Activated B cell treated with CpG ODN at 0.5 μM for 24 hours (primary cell): ENCODE measurements at regions of chr2 and their contacts with region 1.

Region 1: GRCh38 chr2:219177552-219178376 is at the start of gene RETREG2:
- DNase-seq: peak; percentile 78
- ATAC-seq: peak; percentile 45
- H3K4me3 Mint-ChIP-seq: peak within 1 kb of the TSS; percentile 96
- H3K27ac Mint-ChIP-seq: peak within 1 kb of the TSS; percentile 99
- H3K4me1 Mint-ChIP-seq: peaks cover 40% of the 10 kb centered on the region
- H3K27me3 Mint-ChIP-seq: no peaks in the 10 kb centered on the region
- CTCF ChIP-seq: no peak
- total RNA-seq, gene RETREG2: 60.5 and 78.6 TPM in 2 replicates

Region 2: DNA sequence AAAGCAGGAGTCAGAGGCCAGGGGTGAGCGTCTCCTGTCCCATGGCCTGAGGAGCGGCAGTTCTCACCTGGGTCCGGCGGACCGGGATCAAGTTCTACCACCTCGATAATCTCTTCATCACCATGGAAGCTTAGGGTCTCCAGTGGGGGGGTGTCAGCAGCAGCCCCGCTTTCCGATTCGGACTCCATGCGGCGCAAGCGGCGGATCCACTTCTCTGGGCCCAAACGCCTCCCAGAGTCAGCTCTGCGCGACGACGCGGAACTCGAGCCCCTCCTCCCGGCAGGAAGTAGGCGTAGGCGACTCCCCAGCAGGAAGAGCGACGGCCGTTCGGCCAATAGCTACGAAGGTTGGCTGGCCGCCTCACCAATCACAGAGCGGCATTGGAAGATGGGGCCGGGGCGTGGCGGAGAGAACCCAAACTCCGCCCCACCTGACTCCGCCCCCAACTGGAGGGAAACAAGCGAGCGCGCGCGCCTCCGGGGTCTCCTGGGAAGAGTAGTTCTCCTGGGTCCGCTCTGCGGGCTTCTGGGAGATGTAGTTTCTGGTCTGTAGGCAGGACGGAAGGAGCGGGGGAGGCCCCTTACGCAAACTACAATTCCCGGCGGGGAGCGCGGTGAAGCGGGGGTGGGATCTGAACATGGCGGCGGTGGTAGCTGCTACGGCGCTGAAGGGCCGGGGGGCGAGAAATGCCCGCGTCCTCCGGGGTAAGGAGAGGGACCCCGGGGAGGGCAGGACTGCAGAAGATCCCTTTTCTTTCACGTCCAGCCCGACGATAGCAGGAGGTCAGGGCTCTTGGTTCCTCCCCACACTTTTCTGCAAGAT is 907.7 kb before region 1 on chr2 and contains the starts of genes AAMP and PNKD:
- CTCF ChIA-PET with region 1: no interaction called
- POLR2A ChIA-PET with region 1: no interaction called
- intact Hi-C with region 1: loop called (anchors 5 kb)
- DNase-seq: peak; percentile 100
- ATAC-seq: peak; percentile 83
- H3K4me3 Mint-ChIP-seq: peak within 1 kb of the TSS; percentile 93
- H3K27ac Mint-ChIP-seq: peak within 1 kb of the TSS; percentile 88
- H3K4me1 Mint-ChIP-seq: peaks cover 67% of the 10 kb centered on the region
- H3K27me3 Mint-ChIP-seq: no peaks in the 10 kb centered on the region
- CTCF ChIP-seq: no peak
- total RNA-seq, gene AAMP: 63.4 and 63.6 TPM in 2 replicates
- total RNA-seq, gene PNKD: 21.0 and 23.7 TPM in 2 replicates

Region 3: GRCh38 chr2:218710687-218711549 is 466.8 kb before region 1 on chr2 and contains the start of gene TTLL4:
- CTCF ChIA-PET with region 1: no interaction called
- POLR2A ChIA-PET with region 1: no interaction called
- intact Hi-C with region 1: loop called (anchors 5 kb)
- DNase-seq: peak; percentile 98
- ATAC-seq: peak; percentile 97
- H3K4me3 Mint-ChIP-seq: peak within 1 kb of the TSS; percentile 91
- H3K27ac Mint-ChIP-seq: peak within 1 kb of the TSS; percentile 86
- H3K4me1 Mint-ChIP-seq: peaks cover 26% of the 10 kb centered on the region
- H3K27me3 Mint-ChIP-seq: no peaks in the 10 kb centered on the region
- CTCF ChIP-seq: no peak
- total RNA-seq, gene TTLL4: 36.0 and 37.2 TPM in 2 replicates

Region 4: DNA sequence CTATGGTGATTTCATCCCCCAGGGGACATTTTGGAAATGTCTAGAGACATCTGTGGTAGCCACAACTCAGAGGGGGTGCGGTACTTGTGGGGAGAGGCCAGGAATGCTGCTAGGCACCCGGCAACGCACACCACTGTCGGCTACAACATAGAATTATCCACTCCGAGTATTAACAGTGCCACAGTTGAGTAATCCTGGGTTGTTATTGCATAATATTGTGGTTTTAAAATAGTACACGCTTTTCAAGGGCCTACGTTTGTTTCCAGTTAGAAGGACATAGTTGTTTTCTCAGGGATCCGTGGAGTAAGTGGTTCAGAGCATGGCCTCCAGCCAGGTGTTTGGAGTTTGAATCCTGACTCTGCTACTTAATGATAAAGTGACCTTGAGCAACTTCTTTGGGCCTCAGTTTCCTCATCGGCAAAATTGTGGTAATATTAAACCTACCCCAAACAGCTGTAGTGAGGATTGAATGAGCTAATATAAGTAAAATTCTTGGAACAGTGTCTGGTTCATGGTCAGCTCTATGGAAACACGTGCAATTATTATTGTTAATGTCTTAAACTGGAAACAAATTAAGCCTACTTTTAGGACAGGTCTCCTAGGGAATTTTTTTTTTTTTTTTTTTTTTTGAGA is 371.3 kb before region 1 on chr2:
- CTCF ChIA-PET with region 1: no interaction called
- POLR2A ChIA-PET with region 1: no interaction called
- intact Hi-C with region 1: no loop called
- DNase-seq: no peak
- ATAC-seq: no peak
- H3K4me3 Mint-ChIP-seq: no peak overlapping the region
- H3K27ac Mint-ChIP-seq: no peak overlapping the region
- H3K4me1 Mint-ChIP-seq: peaks cover 4% of the 10 kb centered on the region
- H3K27me3 Mint-ChIP-seq: peaks cover 34% of the 10 kb centered on the region
- CTCF ChIP-seq: no peak

Region 5: DNA sequence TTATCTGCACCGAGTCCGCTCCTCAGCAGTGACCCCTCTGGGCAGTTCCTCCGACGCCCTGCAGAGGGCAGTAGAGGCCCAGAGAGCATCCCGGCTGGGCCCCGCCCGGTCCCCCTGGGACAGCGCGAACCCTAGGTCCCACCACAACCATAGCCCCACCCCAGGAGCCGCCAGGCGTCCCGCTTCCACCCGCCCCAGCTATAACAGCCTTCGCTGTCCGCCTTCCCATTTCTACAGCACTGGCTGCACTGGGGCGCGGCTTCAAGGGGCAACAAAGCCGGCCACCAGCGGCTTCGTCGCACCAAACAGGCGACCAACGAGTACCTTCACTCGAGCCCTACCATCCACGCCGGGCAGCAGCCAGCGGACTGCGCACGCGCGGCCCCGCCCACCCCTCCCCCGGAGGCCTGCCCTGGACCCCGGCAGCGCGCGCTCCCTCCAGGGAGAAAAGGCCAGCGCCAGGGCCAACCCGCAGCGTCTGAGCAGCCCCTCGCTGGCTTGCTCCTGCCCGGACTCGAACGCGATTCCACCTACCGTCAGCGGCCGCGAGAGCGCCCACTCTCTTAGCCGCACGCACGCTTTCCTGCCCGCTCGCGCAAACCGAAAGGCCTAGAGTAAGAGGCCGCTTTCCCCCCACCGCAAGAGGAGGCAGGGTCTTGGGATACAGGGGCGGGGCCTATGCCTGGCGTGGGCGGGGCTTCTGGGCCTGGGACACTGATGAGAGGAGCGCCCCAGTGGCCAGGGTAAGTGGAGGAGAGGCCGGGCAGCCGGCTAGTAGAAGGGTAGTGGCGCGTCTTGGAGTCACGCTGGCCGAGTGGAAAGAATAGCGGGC is 17.4 kb before region 1 on chr2 and contains the start of gene NHEJ1:
- CTCF ChIA-PET with region 1: interaction called, 11 read pairs
- POLR2A ChIA-PET with region 1: interaction called, 10 read pairs
- intact Hi-C with region 1: loop called (anchors 1 kb)
- DNase-seq: peak; percentile 96
- ATAC-seq: peak; percentile 87
- H3K4me3 Mint-ChIP-seq: peak within 1 kb of the TSS; percentile 96
- H3K27ac Mint-ChIP-seq: peak within 1 kb of the TSS; percentile 98
- H3K4me1 Mint-ChIP-seq: peaks cover 16% of the 10 kb centered on the region
- H3K27me3 Mint-ChIP-seq: no peaks in the 10 kb centered on the region
- CTCF ChIP-seq: peak; percentile 42
- total RNA-seq, gene NHEJ1: 19.1 and 25.0 TPM in 2 replicates

Region 6: DNA sequence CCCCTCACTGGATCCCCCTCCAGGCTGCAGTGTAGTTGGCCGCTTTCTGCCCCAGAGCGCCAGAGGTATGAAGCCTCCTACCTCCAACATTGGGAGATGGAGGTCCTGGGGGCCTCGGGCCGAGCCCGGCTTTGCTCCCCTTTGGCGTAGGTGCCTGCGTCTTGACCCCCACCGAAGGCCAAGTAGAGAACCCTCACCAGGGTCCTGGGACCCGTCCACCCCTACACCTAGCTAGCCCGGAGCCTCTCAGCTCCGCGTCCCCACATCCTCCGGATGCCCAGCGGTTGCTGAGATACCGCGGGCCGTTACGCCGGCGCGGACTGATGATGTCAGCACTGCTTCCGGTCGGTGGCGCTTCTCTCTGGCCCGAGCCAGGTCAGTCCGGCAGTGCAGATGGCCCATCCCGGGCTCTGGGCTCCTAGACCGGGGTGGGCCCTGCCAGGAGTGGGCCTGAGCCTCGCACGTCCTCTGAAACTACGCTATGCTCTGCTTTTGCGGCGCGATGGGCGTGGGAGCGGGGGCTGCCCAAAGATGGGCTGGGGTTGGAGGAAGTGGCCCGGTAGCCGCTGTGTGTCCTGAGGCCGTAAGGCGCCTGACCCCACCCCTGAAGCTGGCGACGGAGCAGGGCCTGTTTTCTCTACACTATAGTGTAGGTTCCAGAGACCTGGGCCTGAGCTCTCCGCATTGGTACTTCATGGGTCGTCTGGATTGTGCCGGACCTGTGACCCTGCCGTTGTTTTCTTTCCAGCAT is 67.6 kb after region 1 on chr2 and contains the starts of genes GLB1L and STK16:
- CTCF ChIA-PET with region 1: no interaction called
- POLR2A ChIA-PET with region 1: interaction called, 62 read pairs
- intact Hi-C with region 1: no loop called
- DNase-seq: peak; percentile 95
- ATAC-seq: peak; percentile 64
- H3K4me3 Mint-ChIP-seq: peak within 1 kb of the TSS; percentile 90
- H3K27ac Mint-ChIP-seq: peak within 1 kb of the TSS; percentile 98
- H3K4me1 Mint-ChIP-seq: peaks cover 57% of the 10 kb centered on the region
- H3K27me3 Mint-ChIP-seq: no peaks in the 10 kb centered on the region
- CTCF ChIP-seq: no peak
- total RNA-seq, gene GLB1L: 4.5 and 4.6 TPM in 2 replicates
- total RNA-seq, gene STK16: 31.0 and 36.5 TPM in 2 replicates

Region 7: DNA sequence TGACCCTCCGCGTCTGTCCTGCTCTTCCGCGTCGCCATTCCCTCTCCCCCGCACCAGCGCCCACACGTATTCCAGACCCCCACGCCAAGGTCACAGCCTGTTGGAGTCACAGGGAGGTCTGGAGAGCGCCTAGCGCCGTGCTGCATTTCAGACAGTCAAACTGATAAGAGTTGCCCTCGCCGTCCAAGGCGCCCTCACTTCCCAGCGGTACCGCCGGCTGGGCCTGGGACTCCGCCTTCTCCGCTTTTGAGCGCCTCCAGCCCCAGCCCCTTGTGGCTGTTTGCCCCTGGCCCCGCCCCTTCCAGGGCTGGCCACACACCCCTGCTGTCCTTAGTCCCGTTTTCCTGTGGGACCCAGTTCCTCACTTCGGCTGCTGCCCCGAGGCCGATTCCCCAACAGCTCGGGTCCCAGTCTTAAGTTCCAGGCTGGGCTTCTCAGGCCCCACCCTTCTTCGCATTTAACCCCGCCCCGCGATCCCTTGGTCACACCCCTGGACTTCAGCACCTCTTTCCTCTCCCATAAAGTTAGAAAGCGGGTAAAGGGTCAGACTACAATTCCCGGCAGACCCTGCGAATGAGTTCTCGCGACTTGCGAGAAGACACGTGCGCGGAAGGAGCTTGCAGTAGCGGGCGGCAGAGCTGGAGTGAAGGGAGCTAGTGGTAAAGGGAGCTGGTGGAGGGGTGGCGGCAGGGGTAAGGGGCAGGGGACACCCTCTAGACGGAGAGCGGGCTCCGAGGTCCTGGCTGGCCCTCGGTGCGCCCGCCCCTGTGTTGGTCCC is 320.7 kb after region 1 on chr2 and contains the start of gene GMPPA:
- CTCF ChIA-PET with region 1: no interaction called
- POLR2A ChIA-PET with region 1: no interaction called
- intact Hi-C with region 1: loop called (anchors 5 kb)
- DNase-seq: peak; percentile 86
- ATAC-seq: peak; percentile 94
- H3K4me3 Mint-ChIP-seq: peak within 1 kb of the TSS; percentile 98
- H3K27ac Mint-ChIP-seq: peak within 1 kb of the TSS; percentile 86
- H3K4me1 Mint-ChIP-seq: peaks cover 34% of the 10 kb centered on the region
- H3K27me3 Mint-ChIP-seq: peaks cover 28% of the 10 kb centered on the region
- CTCF ChIP-seq: no peak
- total RNA-seq, gene GMPPA: 32.9 and 33.0 TPM in 2 replicates